Activated CD4-positive, alpha-beta T cell treated with anti-CD3 and anti-CD28 coated beads for 36 hours (primary cell): ENCODE measurements at regions of chr13 and their contacts with region 1.

Region 1: DNA sequence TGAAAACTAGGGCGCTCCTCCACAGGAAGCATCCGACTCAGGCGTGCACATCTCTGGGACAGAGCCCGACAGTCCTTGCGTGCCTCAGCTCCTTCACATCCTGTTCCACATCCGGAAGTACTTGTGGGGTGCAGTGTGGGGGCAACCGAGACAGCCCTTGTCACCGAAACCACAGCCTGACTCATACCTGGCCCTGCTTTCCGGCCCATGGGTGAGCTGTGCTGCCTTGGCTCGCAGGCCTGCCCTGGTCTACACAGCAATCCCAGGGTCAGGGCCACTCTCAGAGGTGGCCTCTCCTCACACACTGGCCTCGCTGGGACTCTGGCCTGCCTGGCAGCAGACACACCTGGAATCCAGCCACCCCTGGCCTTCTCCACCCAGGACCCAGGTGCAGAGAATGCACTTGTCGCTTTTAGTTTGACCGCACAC is 100.4 kb downstream of the STK24 start:
- DNase-seq: peak; percentile 94
- ATAC-seq: peak; percentile 86
- H3K4me3 Mint-ChIP-seq: peak overlapping the region; percentile 63
- H3K27ac Mint-ChIP-seq: peak overlapping the region; percentile 93
- H3K4me1 Mint-ChIP-seq: peaks cover 56% of the 10 kb centered on the region
- H3K27me3 Mint-ChIP-seq: no peaks in the 10 kb centered on the region

Region 2: DNA sequence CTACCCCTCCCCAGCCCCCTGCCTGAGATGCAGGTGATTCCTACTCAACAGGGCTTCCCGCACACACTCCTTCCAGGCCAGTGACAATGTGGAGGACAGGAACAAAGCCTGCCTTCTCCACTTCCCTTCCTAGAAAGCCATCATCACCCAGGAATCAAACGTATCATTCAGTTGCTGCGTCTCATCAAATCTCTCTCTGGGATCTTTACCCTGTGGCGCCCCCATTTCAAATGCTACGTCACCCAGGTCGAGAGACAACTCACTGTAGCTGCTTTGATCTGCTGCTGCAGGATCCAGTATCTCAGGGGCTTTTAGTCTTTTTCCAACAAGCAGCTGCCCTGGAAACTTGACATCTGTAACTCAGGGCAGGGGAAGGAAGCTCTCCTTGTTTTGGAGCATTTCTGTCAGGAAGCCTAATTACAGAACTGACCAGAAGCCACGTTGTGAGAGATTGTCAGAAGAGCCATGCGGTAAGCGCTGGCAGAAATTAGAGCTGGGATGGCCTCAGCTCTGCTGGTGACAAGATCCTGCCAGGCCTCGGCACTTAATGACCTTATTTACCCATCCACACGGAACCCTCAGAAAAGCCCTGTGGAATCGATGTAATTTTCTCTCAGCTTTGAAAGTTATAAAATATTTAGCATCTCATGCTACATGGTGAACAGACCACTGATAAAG is 40.2 kb before region 1 on chr13:
- CTCF ChIA-PET with region 1: no interaction called
- POLR2A ChIA-PET with region 1: no interaction called
- intact Hi-C with region 1: no loop called
- DNase-seq: no peak
- ATAC-seq: no peak
- H3K4me3 Mint-ChIP-seq: no peak overlapping the region
- H3K27ac Mint-ChIP-seq: no peak overlapping the region
- H3K4me1 Mint-ChIP-seq: no peaks in the 10 kb centered on the region
- H3K27me3 Mint-ChIP-seq: peaks cover 5% of the 10 kb centered on the region

Region 3: DNA sequence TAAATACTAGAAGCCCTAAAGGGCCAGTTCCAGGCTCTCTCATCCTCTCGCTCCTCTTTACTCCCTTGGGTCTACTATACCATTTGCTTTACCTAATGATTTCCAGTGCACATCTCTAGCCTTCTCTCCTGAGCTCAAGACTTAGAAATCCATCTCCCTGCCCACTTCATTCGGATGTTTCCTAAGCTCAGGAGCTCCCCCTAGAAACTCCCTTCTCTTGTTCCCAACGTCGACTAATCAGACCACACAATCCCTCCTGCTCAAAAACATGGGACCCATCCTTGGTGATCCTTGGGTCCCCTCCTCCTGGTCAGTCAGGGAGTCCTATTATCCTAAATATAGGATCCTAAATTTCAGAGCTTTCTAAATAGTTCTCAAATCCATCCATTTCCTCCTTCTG is 121.5 kb after region 1 on chr13:
- CTCF ChIA-PET with region 1: interaction called, 3 read pairs
- POLR2A ChIA-PET with region 1: no interaction called
- intact Hi-C with region 1: loop called in 1 of 2 experiments (anchors 1 kb)
- DNase-seq: no peak
- ATAC-seq: no peak
- H3K4me3 Mint-ChIP-seq: no peak overlapping the region
- H3K27ac Mint-ChIP-seq: peak overlapping the region; percentile 20
- H3K4me1 Mint-ChIP-seq: peaks cover 16% of the 10 kb centered on the region
- H3K27me3 Mint-ChIP-seq: no peaks in the 10 kb centered on the region